Activated T-helper 1 cell treated with anti-CD3 and anti-CD28 coated beads, Interleukin-12 subunit alpha, Interleukin-12 subunit beta, Interleukin-2, Interleukin-4 antibody, amounts not matched to agents 30 ng/mL and 10 ng/mL and 1 ng/mL, durations not matched to agents 14 hours and 24 hours and 36 hours (primary cell): ENCODE measurements at regions of chr2 and their contacts with region 1.

Region 1: GRCh38 chr2:183825710-183826109 is 701.5 kb downstream of the NUP35 start:
- DNase-seq: no peak
- H3K4me3 Mint-ChIP-seq: no peak overlapping the region
- H3K27ac Mint-ChIP-seq: no peak overlapping the region
- H3K4me1 Mint-ChIP-seq: no peaks in the 10 kb centered on the region
- H3K27me3 Mint-ChIP-seq: no peaks in the 10 kb centered on the region

Region 2: GRCh38 chr2:183093857-183094657 is 731.7 kb before region 1 on chr2:
- intact Hi-C with region 1: no loop called
- DNase-seq: no peak
- H3K4me3 Mint-ChIP-seq: no peak overlapping the region
- H3K27ac Mint-ChIP-seq: no peak overlapping the region
- H3K4me1 Mint-ChIP-seq: no peaks in the 10 kb centered on the region
- H3K27me3 Mint-ChIP-seq: no peaks in the 10 kb centered on the region

Region 3: DNA sequence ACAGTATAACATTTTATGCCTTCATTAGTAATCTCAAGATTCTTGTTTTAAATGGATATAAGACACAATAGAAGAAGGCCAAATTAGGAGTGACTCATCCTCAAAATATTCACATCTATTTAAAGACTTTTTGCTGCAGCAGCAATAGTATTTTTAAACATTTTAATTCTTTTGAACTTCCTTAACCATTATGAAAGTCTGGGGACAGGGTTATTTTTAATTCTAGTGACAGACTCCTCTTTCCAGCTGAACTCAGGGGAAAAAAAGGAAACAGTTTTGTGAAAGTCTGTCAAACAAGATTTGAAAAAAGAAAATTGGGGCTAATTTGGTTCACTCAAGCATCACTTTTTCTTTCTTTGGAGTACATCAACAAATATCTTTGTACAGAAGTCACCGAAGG is 159.7 kb before region 1 on chr2:
- intact Hi-C with region 1: no loop called
- DNase-seq: no peak
- H3K4me3 Mint-ChIP-seq: no peak overlapping the region
- H3K27ac Mint-ChIP-seq: no peak overlapping the region
- H3K4me1 Mint-ChIP-seq: no peaks in the 10 kb centered on the region
- H3K27me3 Mint-ChIP-seq: no peaks in the 10 kb centered on the region

Region 4: GRCh38 chr2:183752571-183752970 is 73.1 kb before region 1 on chr2:
- intact Hi-C with region 1: no loop called
- DNase-seq: no peak
- H3K4me3 Mint-ChIP-seq: no peak overlapping the region
- H3K27ac Mint-ChIP-seq: no peak overlapping the region
- H3K4me1 Mint-ChIP-seq: no peaks in the 10 kb centered on the region
- H3K27me3 Mint-ChIP-seq: no peaks in the 10 kb centered on the region

Region 5: DNA sequence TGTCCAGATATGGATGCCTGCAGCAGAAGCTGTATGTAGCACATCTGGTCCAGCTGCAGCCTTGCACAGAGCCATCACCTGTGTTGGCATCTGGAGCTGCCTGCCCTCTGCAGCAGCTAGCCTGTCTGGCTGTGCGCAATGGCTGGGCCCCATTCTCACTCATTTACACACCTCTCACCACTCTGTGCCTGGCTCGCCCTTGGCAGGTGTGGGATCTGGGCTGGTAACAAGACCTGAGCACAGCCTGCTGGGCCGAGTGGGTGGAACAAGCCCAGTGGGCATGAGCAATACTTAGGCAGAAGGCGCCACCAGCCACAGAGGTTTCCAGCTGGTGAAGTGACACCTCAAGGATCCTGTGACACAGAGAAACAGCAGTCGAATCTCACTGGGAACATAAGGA is 12.6 kb after region 1 on chr2:
- intact Hi-C with region 1: loop called (anchors 1 kb)
- DNase-seq: no peak
- H3K4me3 Mint-ChIP-seq: no peak overlapping the region
- H3K27ac Mint-ChIP-seq: no peak overlapping the region
- H3K4me1 Mint-ChIP-seq: no peaks in the 10 kb centered on the region
- H3K27me3 Mint-ChIP-seq: no peaks in the 10 kb centered on the region

Region 6: GRCh38 chr2:183868707-183869106 is 43.0 kb after region 1 on chr2:
- intact Hi-C with region 1: no loop called
- DNase-seq: no peak
- H3K4me3 Mint-ChIP-seq: no peak overlapping the region
- H3K27ac Mint-ChIP-seq: no peak overlapping the region
- H3K4me1 Mint-ChIP-seq: no peaks in the 10 kb centered on the region
- H3K27me3 Mint-ChIP-seq: no peaks in the 10 kb centered on the region